PC-9 (cell line): ENCODE measurements at regions of chr2 and their contacts with region 1.

Region 1: GRCh38 chr2:133886735-133887660 is 318.7 kb upstream of the NCKAP5 start:
- DNase-seq: peak; percentile 41 to 49
- H3K4me3 ChIP-seq: no peak overlapping the region
- H3K27ac ChIP-seq: no peak overlapping the region
- H3K4me1 ChIP-seq: no peaks in the 10 kb centered on the region
- H3K27me3 ChIP-seq: peaks cover 95% of the 10 kb centered on the region
- CTCF ChIP-seq: peak; percentile 70

Region 2: GRCh38 chr2:133927894-133928464 is 41.0 kb after region 1 on chr2:
- CTCF ChIA-PET with region 1: no interaction called
- POLR2A ChIA-PET with region 1: no interaction called
- intact Hi-C with region 1: no loop called
- DNase-seq: no peak
- H3K4me3 ChIP-seq: no peak overlapping the region
- H3K27ac ChIP-seq: no peak overlapping the region
- H3K4me1 ChIP-seq: no peaks in the 10 kb centered on the region
- H3K27me3 ChIP-seq: peaks cover 7% of the 10 kb centered on the region; the same call in 1 of the 2 replicates
- CTCF ChIP-seq: no peak

Region 3: GRCh38 chr2:134207564-134208209 is 320.7 kb after region 1 on chr2:
- CTCF ChIA-PET with region 1: no interaction called
- POLR2A ChIA-PET with region 1: no interaction called
- intact Hi-C with region 1: loop called (anchors 5 kb)
- DNase-seq: peak in 1 of 2 experiments; percentile 46
- H3K4me3 ChIP-seq: no peak overlapping the region
- H3K27ac ChIP-seq: no peak overlapping the region
- H3K4me1 ChIP-seq: no peaks in the 10 kb centered on the region
- H3K27me3 ChIP-seq: no peaks in the 10 kb centered on the region
- CTCF ChIP-seq: peak; percentile 80

Region 4: DNA sequence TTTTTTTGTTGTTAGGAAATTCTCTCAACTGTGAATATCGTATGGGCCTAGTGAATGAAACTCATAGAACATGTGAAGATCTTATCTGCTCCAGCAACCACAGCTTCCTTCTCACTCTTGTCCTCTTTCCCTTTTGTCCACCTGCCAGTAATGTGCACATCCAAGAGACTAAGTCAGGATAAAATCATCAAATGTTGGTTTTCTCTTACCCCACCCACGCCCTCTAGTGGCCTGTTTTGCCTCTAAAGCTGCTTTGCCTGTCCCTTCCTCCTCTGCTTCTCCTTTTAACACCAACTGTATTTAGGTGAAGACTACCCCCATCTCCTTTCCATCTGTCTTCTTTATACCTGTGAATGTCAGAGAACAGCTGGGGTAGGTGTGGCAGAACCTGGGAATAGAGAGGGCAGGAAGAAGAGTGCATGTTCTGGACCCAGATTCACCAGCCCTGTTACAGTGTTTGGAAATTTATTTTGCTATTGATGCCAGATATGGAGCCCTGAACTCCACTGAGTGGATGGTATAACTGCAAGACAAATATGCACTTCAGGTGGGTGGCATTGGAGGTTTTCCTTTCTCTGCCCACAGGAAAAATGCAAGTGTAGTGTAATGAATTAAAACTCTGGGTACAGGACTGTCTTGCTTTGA is 358.5 kb after region 1 on chr2:
- CTCF ChIA-PET with region 1: no interaction called
- POLR2A ChIA-PET with region 1: no interaction called
- intact Hi-C with region 1: loop called (anchors 2 kb)
- DNase-seq: peak; percentile 46 to 63
- H3K4me3 ChIP-seq: no peak overlapping the region
- H3K27ac ChIP-seq: no peak overlapping the region
- H3K4me1 ChIP-seq: no peaks in the 10 kb centered on the region
- H3K27me3 ChIP-seq: no peaks in the 10 kb centered on the region
- CTCF ChIP-seq: peak; percentile 89

Region 5: DNA sequence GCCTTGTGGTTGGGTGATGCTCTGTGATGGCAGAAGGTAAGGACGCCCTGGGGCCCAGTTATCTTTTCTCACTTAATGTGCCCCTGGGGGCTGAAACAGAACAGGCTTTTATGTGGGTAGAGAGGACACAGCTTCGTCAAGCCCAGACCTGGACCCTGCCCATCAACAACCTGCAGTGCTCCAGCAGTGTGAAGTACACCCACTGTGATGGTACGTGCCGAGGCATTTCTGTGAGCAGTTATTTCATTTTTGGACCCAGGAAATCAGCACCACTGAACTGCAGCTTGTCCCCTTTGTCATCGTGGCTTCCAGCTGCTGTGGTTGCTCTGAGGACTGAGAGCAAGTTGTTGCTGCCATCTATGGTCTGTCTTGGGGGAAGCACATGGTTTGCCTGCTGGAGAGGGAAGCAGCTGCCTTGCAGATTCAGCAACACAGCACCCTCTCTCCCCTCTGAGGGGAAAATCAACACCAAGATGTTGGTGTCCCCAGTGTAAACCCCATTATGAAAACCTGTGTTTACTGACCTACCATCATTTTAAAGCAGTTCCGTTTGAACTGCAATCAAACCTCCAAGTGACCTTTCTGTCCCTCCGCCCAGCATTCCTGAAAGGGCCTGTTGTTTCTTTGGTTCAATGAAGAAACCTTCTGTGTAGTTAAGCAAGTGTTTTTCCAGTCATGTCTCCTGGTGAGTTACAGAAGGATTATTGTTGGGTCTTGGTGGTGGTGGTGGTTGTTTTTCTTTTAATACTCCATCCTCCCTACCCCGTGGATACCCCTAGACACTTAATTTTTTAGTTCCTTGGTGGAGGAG is 525.0 kb after region 1 on chr2:
- CTCF ChIA-PET with region 1: no interaction called
- POLR2A ChIA-PET with region 1: no interaction called
- intact Hi-C with region 1: loop called (anchors 1 kb)
- DNase-seq: peak; percentile 36 to 57
- H3K4me3 ChIP-seq: no peak overlapping the region
- H3K27ac ChIP-seq: no peak overlapping the region
- H3K4me1 ChIP-seq: peaks cover 2% of the 10 kb centered on the region
- H3K27me3 ChIP-seq: no peaks in the 10 kb centered on the region
- CTCF ChIP-seq: peak; percentile 70

Region 6: GRCh38 chr2:134452042-134452733 is 565.2 kb after region 1 on chr2:
- CTCF ChIA-PET with region 1: interaction called, 4 read pairs
- POLR2A ChIA-PET with region 1: no interaction called
- intact Hi-C with region 1: loop called (anchors 1 kb)
- DNase-seq: no peak
- H3K4me3 ChIP-seq: no peak overlapping the region
- H3K27ac ChIP-seq: no peak overlapping the region
- H3K4me1 ChIP-seq: no peaks in the 10 kb centered on the region
- H3K27me3 ChIP-seq: no peaks in the 10 kb centered on the region
- CTCF ChIP-seq: no peak